ENCODE measurements at regions of chr16 and their contacts with region 1.

Region 1: GRCh38 chr16:57544119-57544653 is 1.7 kb downstream of the ADGRG5 start:
- DNase-seq: no peak
- ATAC-seq: no peak
- H3K4me3 ChIP-seq: no peak overlapping the region
- H3K27ac ChIP-seq: no peak overlapping the region
- H3K4me1 ChIP-seq: no peaks in the 10 kb centered on the region
- H3K27me3 ChIP-seq: no peaks in the 10 kb centered on the region
- CTCF ChIP-seq: no peak

Region 2: DNA sequence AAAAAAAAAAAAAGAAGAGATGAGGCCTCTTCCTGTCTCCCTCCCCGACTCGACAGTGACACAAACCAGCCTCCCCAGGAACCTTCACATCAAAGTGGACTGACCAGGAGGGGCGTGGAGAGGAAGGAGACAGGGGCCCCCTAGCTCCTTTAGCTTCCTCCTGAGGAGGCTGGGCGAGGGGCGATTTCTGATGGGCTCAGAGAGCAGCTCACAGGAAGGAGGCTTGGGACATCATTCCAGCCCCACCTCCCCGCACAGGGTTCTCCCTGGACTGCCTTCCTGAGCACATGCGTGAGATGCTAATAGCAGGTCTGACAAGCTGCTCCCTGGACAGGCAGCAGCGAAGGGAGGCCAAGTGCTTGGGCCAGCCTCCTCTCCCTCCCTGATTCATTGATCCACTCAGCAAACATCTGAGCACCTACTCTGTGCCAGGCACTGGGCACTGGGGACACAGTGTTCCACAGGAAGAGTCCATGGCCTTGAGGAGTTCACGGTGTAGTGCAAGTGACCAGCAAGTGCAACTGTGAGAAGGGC is 43.5 kb before region 1 on chr16:
- CTCF ChIA-PET with region 1: interaction called, 11 read pairs
- POLR2A ChIA-PET with region 1: no interaction called
- in situ Hi-C with region 1: no loop called
- intact Hi-C with region 1: no loop called
- DNase-seq: no peak
- ATAC-seq: no peak
- H3K4me3 ChIP-seq: no peak overlapping the region
- H3K27ac ChIP-seq: no peak overlapping the region
- H3K4me1 ChIP-seq: no peaks in the 10 kb centered on the region
- H3K27me3 ChIP-seq: no peaks in the 10 kb centered on the region
- CTCF ChIP-seq: no peak

Region 3: DNA sequence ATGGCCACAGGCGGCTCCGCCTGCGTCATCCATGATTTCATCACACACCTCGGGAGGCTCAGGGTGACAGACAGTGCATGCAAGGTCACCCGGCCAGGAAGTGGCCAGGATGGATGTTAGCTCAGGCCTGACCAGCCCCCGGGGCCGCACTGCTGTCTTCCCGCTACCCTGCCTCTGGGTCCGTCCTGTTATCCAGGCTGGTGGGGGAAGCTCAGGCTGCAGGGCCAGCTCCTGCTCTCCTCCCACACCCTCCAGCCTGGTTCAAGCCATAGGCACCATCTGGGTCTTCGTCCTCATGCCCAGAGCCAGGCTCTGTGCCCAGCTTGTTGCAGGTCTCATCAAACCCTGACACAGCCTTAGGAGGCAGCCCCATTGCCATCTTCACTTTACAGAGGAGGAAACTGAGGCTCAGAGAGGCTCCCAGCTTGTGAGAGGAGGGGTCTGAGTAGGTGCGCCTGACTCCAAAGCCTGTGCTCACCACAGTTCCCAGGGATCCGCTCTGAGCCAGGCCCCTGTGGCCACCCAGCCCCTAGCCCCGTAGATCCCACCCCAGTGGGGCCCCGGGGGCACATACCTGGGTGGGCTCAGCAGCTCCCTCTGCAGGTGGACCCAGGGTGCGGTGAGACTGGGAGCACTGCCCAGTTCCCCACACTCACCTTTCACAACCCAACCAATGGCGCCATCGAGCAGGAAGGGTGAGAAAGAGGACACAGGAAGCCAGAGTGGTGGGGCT is 123.5 kb after region 1 on chr16:
- CTCF ChIA-PET with region 1: no interaction called
- POLR2A ChIA-PET with region 1: no interaction called
- in situ Hi-C with region 1: no loop called
- intact Hi-C with region 1: no loop called
- DNase-seq: no peak
- ATAC-seq: no peak
- H3K4me3 ChIP-seq: no peak overlapping the region
- H3K27ac ChIP-seq: no peak overlapping the region
- H3K4me1 ChIP-seq: no peaks in the 10 kb centered on the region
- H3K27me3 ChIP-seq: no peaks in the 10 kb centered on the region
- CTCF ChIP-seq: no peak; the same call in 1 of the 2 replicates

Region 4: GRCh38 chr16:57726433-57726947 is 182.3 kb after region 1 on chr16:
- CTCF ChIA-PET with region 1: no interaction called
- POLR2A ChIA-PET with region 1: interaction called, 13 read pairs
- in situ Hi-C with region 1: no loop called
- intact Hi-C with region 1: no loop called
- DNase-seq: no peak
- ATAC-seq: no peak
- H3K4me3 ChIP-seq: no peak overlapping the region
- H3K27ac ChIP-seq: no peak overlapping the region
- H3K4me1 ChIP-seq: no peaks in the 10 kb centered on the region
- H3K27me3 ChIP-seq: no peaks in the 10 kb centered on the region
- CTCF ChIP-seq: no peak